ENCODE measurements at regions of chr17 and their contacts with region 1.

Region 1: DNA sequence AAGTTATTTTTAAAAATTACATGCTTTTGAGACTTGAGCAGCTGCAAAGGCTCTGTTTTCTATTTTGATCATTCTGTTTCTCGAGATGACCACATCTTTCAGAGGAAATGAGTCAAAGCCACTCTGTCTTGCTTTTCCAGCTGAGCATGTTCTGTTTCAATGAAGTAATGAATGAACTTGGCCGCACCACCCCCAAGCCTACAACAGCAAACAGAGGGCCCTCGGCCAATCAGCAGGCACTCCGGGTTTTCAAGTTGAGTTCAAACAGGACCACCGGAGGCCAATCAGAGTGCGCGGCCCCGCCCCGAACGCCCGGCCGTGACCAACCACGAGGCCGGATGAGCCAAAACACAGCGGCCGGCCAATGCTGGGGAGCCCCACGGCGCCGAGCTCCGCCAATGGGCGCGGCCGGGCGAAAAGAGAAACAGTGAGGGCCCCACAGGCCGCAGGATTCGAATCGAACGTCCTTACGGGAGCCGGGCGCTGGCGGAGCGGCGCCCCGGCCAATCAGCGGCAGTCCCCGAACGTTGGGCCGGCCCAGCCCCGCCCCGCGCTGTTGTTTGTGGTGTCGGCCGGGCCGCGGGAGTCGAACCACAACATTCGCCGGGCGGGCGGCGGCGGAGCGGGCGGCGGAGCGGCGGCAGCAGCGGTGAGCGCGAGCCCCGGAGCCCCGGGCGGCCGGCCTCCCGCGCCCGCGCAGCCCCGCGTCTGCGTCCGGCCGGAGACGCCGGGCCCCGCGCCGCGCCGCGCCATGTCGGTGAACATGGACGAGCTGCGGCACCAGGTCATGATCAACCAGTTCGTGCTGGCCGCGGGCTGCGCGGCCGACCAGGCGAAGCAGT is at the start of gene UBALD2:
- DNase-seq: peak; percentile 97
- ATAC-seq: peak; percentile 77
- H3K4me3 Mint-ChIP-seq: peak within 1 kb of the TSS; percentile 92
- H3K27ac Mint-ChIP-seq: peak within 1 kb of the TSS; percentile 94
- H3K4me1 Mint-ChIP-seq: peaks cover 80% of the 10 kb centered on the region
- H3K27me3 Mint-ChIP-seq: no peaks in the 10 kb centered on the region
- CTCF ChIP-seq: no peak
- total RNA-seq, gene UBALD2: 144 and 152 TPM in 2 replicates

Region 2: GRCh38 chr17:75784473-75785015 is 480.4 kb before region 1 on chr17 and contains the start of gene UNK:
- CTCF ChIA-PET with region 1: no interaction called
- POLR2A ChIA-PET with region 1: interaction called, 6 read pairs
- intact Hi-C with region 1: loop called (anchors 2 kb)
- DNase-seq: peak; percentile 89
- ATAC-seq: peak; percentile 73
- H3K4me3 Mint-ChIP-seq: peak within 1 kb of the TSS; percentile 86
- H3K27ac Mint-ChIP-seq: peak within 1 kb of the TSS; percentile 99
- H3K4me1 Mint-ChIP-seq: peaks cover 57% of the 10 kb centered on the region
- H3K27me3 Mint-ChIP-seq: no peaks in the 10 kb centered on the region
- CTCF ChIP-seq: no peak
- total RNA-seq, gene UNK: 52.3 and 61.2 TPM in 2 replicates

Region 3: DNA sequence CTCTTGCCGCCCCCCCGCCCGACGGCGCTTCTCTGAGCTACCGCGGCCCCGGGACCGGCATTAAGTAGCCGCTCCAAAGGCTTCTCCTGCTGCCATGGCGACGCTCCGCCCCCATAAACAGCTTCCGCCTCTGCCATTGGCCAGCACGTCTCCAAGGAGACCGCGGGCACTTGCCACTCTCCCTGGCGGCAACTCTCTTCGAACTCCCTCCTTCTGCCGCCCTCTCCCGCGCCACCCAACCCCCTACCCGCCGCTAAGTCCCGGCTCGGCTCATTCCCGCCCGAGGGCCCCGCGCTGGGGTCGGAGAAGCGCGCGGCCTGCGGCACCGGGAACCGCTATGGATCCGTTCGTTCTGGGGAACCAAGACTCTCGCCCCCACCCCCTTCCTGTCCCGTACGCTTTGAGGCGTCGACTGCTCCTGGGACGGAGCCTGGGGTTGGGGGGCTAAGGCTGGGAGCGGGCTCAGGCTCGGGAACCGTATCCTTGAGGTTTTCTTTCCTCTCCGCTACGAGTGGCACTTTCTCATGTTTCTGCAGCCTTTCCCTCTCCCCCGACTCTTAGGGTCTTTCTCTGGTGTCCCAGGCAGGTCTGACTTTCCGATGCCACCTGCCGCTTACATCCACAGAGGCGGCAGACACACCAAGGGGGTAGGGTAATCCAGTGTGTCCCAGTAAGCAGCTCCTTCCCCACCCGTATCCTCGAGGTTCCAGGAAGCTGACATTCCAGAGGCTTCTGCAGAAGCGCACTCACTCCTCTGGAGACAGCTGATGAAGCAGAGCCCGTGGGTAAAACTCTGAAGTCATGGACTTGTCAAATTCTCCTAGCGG is 123.6 kb before region 1 on chr17 and contains the start of gene FOXJ1:
- CTCF ChIA-PET with region 1: no interaction called
- POLR2A ChIA-PET with region 1: interaction called, 25 read pairs
- intact Hi-C with region 1: no loop called
- DNase-seq: peak; percentile 91
- ATAC-seq: peak; percentile 75
- H3K4me3 Mint-ChIP-seq: peak within 1 kb of the TSS; percentile 80
- H3K27ac Mint-ChIP-seq: peak within 1 kb of the TSS; percentile 61
- H3K4me1 Mint-ChIP-seq: peaks cover 60% of the 10 kb centered on the region
- H3K27me3 Mint-ChIP-seq: peaks cover 10% of the 10 kb centered on the region
- CTCF ChIP-seq: no peak
- total RNA-seq, gene FOXJ1: 0.39 and 0.44 TPM in 2 replicates

Region 4: GRCh38 chr17:76191896-76192295 is 73.1 kb before region 1 on chr17:
- CTCF ChIA-PET with region 1: no interaction called
- POLR2A ChIA-PET with region 1: interaction called, 481 read pairs
- intact Hi-C with region 1: loop called (anchors 2 kb)
- DNase-seq: no peak
- ATAC-seq: peak; percentile 80
- H3K4me3 Mint-ChIP-seq: peak overlapping the region; percentile 38
- H3K27ac Mint-ChIP-seq: peak overlapping the region; percentile 69
- H3K4me1 Mint-ChIP-seq: peaks cover 41% of the 10 kb centered on the region
- H3K27me3 Mint-ChIP-seq: no peaks in the 10 kb centered on the region
- CTCF ChIP-seq: no peak

Region 5: GRCh38 chr17:76240461-76241203 is 24.3 kb before region 1 on chr17 and contains the start of gene RNF157:
- CTCF ChIA-PET with region 1: interaction called, 4 read pairs
- POLR2A ChIA-PET with region 1: interaction called, 135 read pairs
- intact Hi-C with region 1: loop called (anchors 5 kb)
- DNase-seq: peak; percentile 62
- ATAC-seq: peak; percentile 93
- H3K4me3 Mint-ChIP-seq: peak within 1 kb of the TSS; percentile 87
- H3K27ac Mint-ChIP-seq: peak within 1 kb of the TSS; percentile 56
- H3K4me1 Mint-ChIP-seq: peaks cover 12% of the 10 kb centered on the region
- H3K27me3 Mint-ChIP-seq: peaks cover 33% of the 10 kb centered on the region
- CTCF ChIP-seq: no peak
- total RNA-seq, gene RNF157: 3.1 and 3.5 TPM in 2 replicates

Region 6: DNA sequence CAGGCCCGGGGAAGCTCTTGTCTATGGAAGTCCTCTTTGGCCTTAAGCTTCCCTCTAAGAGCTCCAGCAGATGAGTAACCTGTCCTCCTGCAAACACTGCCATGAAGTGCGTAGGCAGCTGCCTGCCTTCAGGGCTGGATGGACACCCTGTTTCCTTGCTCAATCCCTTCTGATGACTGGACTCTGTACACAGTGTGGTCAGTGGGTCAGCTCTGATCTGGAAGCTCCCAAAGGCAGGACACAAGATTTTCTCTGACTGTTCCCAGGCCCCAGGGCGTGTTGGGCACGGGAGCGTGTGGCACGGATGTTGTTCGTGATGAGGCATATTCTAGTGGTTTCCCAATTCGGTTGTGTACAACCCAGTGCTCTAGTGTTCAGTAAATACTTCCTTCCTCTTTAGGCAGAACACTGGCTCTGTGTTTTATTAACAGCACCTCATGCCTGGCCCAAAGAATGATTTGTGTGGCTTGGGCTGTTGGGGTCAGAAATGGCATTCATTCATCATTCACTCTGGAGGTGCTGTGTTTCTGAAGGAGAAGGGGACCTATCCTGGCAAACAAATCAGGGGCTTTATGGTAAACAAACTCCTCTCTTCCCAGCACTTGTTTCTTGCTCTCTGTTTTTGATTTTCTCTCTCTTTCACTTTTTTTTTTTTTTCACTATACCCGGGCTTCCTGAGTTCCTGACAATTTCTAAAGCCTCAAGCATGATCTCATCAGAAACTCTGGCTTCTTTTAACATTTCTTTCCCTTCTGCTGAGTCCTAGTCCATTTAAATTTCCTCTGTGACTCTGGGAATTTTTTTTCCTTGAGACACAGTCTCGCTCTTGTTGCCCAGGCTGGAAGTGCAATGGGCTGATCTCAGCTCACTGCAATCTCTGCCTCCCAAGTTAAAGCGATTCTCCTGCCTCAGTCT is 12.7 kb before region 1 on chr17:
- CTCF ChIA-PET with region 1: interaction called, 3 read pairs
- POLR2A ChIA-PET with region 1: interaction called, 135 read pairs
- intact Hi-C with region 1: loop called (anchors 1 kb)
- DNase-seq: no peak
- ATAC-seq: peak; percentile 97
- H3K4me3 Mint-ChIP-seq: peak overlapping the region; percentile 73
- H3K27ac Mint-ChIP-seq: peak overlapping the region; percentile 85
- H3K4me1 Mint-ChIP-seq: peaks cover 41% of the 10 kb centered on the region
- H3K27me3 Mint-ChIP-seq: no peaks in the 10 kb centered on the region
- CTCF ChIP-seq: no peak

Region 7: DNA sequence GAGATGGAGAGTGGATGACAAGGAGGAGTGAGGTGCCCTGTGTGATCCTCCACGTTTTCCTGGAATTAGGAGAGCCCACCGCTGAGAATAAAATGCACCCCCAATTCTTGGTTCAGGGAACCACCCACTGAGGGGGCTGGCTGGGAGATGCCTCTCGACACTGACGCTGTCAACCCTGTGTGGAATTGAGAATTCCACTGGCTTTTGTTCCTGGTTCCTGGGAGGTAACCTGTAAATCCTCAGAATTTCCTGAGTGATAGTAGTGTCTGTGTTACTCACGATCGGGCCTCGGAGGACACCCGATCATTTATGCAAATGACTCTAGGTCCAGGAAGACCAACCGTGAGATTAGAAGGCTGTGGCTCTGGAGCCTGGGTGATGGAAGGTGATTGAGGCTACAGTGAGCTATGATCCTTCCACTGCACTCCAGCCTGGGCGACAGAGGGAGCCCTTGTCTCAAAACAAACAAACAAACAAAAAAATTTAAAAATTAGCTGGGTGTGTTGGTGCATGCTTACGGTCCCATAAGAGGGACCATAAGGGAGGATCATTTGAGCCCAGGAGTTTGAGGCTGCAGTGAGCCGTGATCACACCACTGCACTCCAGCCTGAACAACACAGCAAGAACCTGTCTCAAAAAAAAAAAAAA is 100.4 kb after region 1 on chr17:
- CTCF ChIA-PET with region 1: no interaction called
- POLR2A ChIA-PET with region 1: no interaction called
- intact Hi-C with region 1: no loop called
- DNase-seq: no peak
- ATAC-seq: no peak
- H3K4me3 Mint-ChIP-seq: no peak overlapping the region
- H3K27ac Mint-ChIP-seq: no peak overlapping the region
- H3K4me1 Mint-ChIP-seq: peaks cover 3% of the 10 kb centered on the region
- H3K27me3 Mint-ChIP-seq: peaks cover 2% of the 10 kb centered on the region
- CTCF ChIP-seq: no peak